Activated naive CD4-positive, alpha-beta T cell treated with anti-CD3 and anti-CD28 coated beads for 36 hours (primary cell): ENCODE measurements at regions of chr11 and their contacts with region 1.

Region 1: GRCh38 chr11:68257475-68258362 is 14.1 kb downstream of the C11orf24 start:
- DNase-seq: peak; percentile 97
- H3K4me3 Mint-ChIP-seq: no peak overlapping the region
- H3K27ac Mint-ChIP-seq: no peak overlapping the region
- H3K4me1 Mint-ChIP-seq: peaks cover 2% of the 10 kb centered on the region
- H3K27me3 Mint-ChIP-seq: no peaks in the 10 kb centered on the region

Region 2: GRCh38 chr11:68213555-68214174 is 44.1 kb before region 1 on chr11:
- CTCF ChIA-PET with region 1: interaction called, 18 read pairs
- intact Hi-C with region 1: no loop called
- DNase-seq: peak; percentile 71
- H3K4me3 Mint-ChIP-seq: peak overlapping the region; percentile 73
- H3K27ac Mint-ChIP-seq: no peak overlapping the region
- H3K4me1 Mint-ChIP-seq: peaks cover 42% of the 10 kb centered on the region
- H3K27me3 Mint-ChIP-seq: peaks cover 7% of the 10 kb centered on the region

Region 3: GRCh38 chr11:68235650-68236049 is 22.1 kb before region 1 on chr11:
- CTCF ChIA-PET with region 1: no interaction called
- intact Hi-C with region 1: no loop called
- DNase-seq: no peak
- H3K4me3 Mint-ChIP-seq: no peak overlapping the region
- H3K27ac Mint-ChIP-seq: no peak overlapping the region
- H3K4me1 Mint-ChIP-seq: no peaks in the 10 kb centered on the region
- H3K27me3 Mint-ChIP-seq: peaks cover 4% of the 10 kb centered on the region

Region 4: DNA sequence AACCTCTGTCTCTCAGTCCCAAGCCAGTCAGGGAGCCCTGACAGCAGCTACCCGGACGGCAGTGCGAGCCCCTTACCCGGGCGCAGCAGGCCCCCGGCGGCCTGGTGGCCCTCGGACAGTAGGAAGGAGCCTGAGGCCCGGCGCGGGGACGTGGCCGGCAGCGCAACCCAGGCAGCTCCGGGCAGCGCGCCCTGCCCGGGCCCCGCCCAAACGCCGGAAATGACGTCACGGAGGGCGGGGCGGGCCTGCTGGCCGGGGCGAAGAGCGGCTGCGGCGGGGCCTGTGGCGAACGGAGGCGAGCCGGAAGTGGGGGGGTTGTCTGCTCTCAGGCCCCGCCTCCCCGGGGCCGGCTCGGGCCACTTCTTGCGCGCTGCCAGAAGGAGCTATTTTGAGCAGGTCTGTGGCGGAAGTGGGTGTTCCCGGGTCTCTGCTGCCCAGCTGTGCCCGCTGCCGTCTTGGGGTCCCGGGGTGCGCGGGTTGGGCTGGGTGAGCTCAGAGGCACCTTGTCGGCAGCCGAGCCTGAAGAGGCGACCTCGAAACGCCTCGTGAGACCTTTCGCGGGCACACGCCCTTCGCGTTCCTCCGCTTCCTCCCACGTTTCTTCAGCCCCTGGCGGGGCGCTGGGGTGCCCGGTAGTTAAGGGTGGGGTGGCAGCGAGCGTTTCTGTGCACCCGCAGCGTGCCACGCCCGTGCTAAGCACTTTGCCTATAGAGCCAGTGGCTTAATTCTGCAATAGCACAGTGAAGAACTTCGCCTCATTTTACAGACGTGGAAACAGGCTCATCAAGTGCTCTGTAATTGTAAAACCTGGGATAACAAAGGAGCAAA is 14.3 kb after region 1 on chr11 and contains the start of gene C11orf24:
- CTCF ChIA-PET with region 1: interaction called, 18 read pairs
- intact Hi-C with region 1: no loop called
- DNase-seq: peak; percentile 93
- H3K4me3 Mint-ChIP-seq: peak within 1 kb of the TSS; percentile 96
- H3K27ac Mint-ChIP-seq: peak within 1 kb of the TSS; percentile 90
- H3K4me1 Mint-ChIP-seq: peaks cover 34% of the 10 kb centered on the region
- H3K27me3 Mint-ChIP-seq: no peaks in the 10 kb centered on the region
- total RNA-seq, gene C11orf24: 28.5 to 29.5 TPM

Region 5: GRCh38 chr11:68282141-68282970 is 24.6 kb after region 1 on chr11:
- CTCF ChIA-PET with region 1: interaction called, 10 read pairs
- intact Hi-C with region 1: no loop called
- DNase-seq: peak; percentile 83
- H3K4me3 Mint-ChIP-seq: peak overlapping the region; percentile 62
- H3K27ac Mint-ChIP-seq: peak overlapping the region; percentile 79
- H3K4me1 Mint-ChIP-seq: peaks cover 26% of the 10 kb centered on the region
- H3K27me3 Mint-ChIP-seq: no peaks in the 10 kb centered on the region

Region 6: GRCh38 chr11:68383976-68384501 is 126.3 kb after region 1 on chr11:
- CTCF ChIA-PET with region 1: no interaction called
- intact Hi-C with region 1: loop called (anchors 1 kb)
- DNase-seq: peak; percentile 76
- H3K4me3 Mint-ChIP-seq: no peak overlapping the region
- H3K27ac Mint-ChIP-seq: no peak overlapping the region
- H3K4me1 Mint-ChIP-seq: peaks cover 13% of the 10 kb centered on the region
- H3K27me3 Mint-ChIP-seq: peaks cover 5% of the 10 kb centered on the region

Region 7: GRCh38 chr11:68447015-68447801 is 189.5 kb after region 1 on chr11:
- CTCF ChIA-PET with region 1: interaction called, 3 read pairs
- intact Hi-C with region 1: loop called (anchors 1 kb)
- DNase-seq: peak; percentile 82
- H3K4me3 Mint-ChIP-seq: no peak overlapping the region
- H3K27ac Mint-ChIP-seq: peak overlapping the region; percentile 18
- H3K4me1 Mint-ChIP-seq: peaks cover 6% of the 10 kb centered on the region
- H3K27me3 Mint-ChIP-seq: no peaks in the 10 kb centered on the region